Dorsolateral prefrontal cortex (tissue), 120 donors: ENCODE measurements at regions of chr9 and their contacts with region 1.

Region 1: DNA sequence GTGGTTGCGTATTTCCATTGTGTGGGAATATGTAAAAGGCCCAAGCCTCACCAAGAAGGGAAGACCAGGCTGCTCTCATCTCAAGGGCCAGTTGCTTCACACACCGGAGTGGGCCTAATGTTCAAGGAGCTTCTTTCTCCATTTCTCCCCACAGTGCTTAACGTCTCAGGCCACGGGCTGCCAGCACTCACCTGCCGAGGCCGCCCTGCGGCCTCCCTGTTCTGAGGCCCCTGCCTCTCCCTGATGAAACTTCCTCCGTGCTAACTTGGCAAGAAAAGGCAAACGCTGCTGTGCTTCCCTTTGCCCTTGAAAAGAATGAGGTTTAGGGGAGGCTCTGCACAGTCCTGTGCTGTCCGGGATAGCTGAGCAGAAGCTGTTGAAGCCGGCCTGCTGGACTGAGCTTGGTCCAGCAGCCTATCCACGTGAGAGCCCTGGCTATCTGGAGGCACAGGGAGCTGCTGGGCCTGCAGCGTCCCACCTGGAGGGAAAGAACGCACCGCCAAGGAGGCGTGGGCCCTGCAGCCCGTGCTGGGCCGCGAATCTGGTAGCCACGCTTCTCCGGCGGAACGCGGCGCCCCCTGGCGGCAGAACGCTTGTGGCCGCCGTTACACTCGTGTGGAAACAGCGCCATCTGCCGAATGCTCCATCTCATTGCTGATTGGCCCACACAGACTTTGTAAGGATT is 73.5 kb upstream of the PRSS3 start:
- DNase-seq: peak; percentile 72 to 91 (median 82)
- H3K4me3 ChIP-seq: peak overlapping the region in 10 of 59 donors; percentile 11 to 28 (median 16)
- H3K27ac ChIP-seq: peak overlapping the region in 2 of 59 donors; percentile 31 to 54
- H3K27me3 ChIP-seq: no peaks in the 10 kb centered on the region
- CTCF ChIP-seq: peak; percentile 93 to 100 (median 100)

Region 2: GRCh38 chr9:33623658-33624586 is 97.9 kb before region 1 on chr9:
- intact Hi-C with region 1: loop called (anchors 1 to 2 kb)
- DNase-seq: peak in 9 of 10 donors; percentile 34 to 76 (median 65)
- H3K4me3 ChIP-seq: peak overlapping the region in 1 of 59 donors; percentile 15
- H3K27ac ChIP-seq: no peak overlapping the region
- H3K27me3 ChIP-seq: peaks cover 0 to 12% (median 0%) of the 10 kb centered on the region in 45 donors
- CTCF ChIP-seq: peak; percentile 78 to 99 (median 94)

Region 3: DNA sequence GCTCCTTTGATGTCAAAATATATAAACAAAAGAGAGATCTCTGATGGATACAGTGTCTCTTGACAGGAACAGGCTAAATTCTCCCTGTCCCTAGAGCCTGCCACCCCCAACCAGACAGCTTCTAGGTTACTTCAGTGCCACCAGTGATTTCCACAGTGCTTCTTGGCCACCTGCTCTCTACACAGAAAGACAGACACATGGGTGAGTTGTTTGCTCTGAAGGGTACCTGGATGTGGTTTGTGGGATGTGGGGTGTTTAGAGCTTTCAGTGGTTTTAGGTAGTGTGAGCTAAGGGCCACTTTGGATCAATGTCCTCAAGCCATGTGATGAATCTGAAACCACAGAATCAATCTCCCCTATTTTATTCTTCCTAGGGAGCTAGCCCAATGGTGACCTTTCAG is 72.4 kb before region 1 on chr9:
- intact Hi-C with region 1: no loop called
- DNase-seq: no peak
- H3K4me3 ChIP-seq: no peak overlapping the region
- H3K27ac ChIP-seq: no peak overlapping the region
- H3K27me3 ChIP-seq: peaks cover 0 to 8% (median 0%) of the 10 kb centered on the region in 45 donors
- CTCF ChIP-seq: no peak

Region 4: DNA sequence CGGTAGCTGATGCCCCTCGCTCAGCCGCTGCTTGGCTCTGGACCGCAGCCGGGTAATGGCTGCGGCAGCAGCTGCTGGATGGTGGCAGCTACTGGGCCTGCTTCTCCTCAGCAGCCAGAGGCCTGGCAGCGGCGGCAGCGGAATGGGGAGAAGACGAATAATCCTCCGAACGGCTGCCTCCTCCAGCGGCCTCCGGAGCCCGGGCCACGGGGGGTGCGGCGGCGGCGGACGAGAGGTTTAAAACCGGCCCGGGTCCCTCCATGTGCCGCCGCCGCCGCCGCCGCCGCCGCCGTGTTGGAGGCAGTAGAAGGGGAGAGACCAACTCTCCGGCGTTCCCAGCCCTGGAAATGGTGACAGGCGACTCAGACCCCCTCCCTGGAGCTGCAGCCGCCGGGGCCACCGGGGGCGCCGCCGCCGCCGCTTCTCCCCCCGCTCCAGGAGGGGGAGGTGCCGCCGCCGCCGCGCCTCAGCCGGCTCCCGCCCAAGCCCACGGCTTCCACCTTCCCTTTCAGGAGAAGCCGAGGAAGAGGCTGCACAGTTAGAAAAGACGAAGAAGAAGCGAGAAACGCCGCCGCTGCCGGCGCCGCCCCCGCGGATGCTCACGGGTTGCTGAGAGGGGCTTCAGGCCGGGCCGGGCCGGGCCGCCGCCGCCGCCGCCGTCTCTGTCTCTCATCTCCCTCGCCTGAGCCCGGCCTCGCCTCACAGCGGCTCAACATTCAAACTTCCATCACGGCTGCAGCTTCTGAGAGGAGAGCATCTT is 44.9 kb before region 1 on chr9:
- intact Hi-C with region 1: loop called in 1 of 2 experiments (anchors 2 kb)
- DNase-seq: peak; percentile 31 to 75 (median 47)
- H3K4me3 ChIP-seq: peak overlapping the region; percentile 42 to 81 (median 67)
- H3K27ac ChIP-seq: peak overlapping the region; percentile 79 to 99 (median 94)
- H3K27me3 ChIP-seq: no peaks in the 10 kb centered on the region
- CTCF ChIP-seq: peak in 6 of 56 donors; percentile 2 to 28 (median 11)

Region 5: GRCh38 chr9:34098307-34098706 is 376.5 kb after region 1 on chr9:
- intact Hi-C with region 1: no loop called
- DNase-seq: peak in 1 of 10 donors; percentile 4
- H3K4me3 ChIP-seq: no peak overlapping the region
- H3K27ac ChIP-seq: peak overlapping the region in 4 of 59 donors; percentile 6 to 30 (median 25)
- H3K27me3 ChIP-seq: no peaks in the 10 kb centered on the region
- CTCF ChIP-seq: no peak